Transverse colon (tissue), 4 donors: ENCODE measurements at regions of chr15 and their contacts with region 1.

Region 1: GRCh38 chr15:63093486-63094205 is 28.0 kb upstream of the LACTB start:
- DNase-seq: peak; percentile 87
- H3K4me3 ChIP-seq: no peak overlapping the region
- H3K27ac ChIP-seq: peak overlapping the region; percentile 28 to 54 (median 39)
- H3K4me1 ChIP-seq: peaks cover 8 to 32% (median 10%) of the 10 kb centered on the region in 4 donors
- H3K27me3 ChIP-seq: no peaks in the 10 kb centered on the region
- CTCF ChIP-seq: peak; percentile 79 to 92 (median 85)
- EP300 ChIP-seq: no peak
- POLR2A ChIP-seq: no peak

Region 2: GRCh38 chr15:62782039-62782791 is 311.4 kb before region 1 on chr15:
- in situ Hi-C with region 1: loop called in 3 of 4 experiments (anchors 10 kb)
- intact Hi-C with region 1: loop called (anchors 1 kb)
- DNase-seq: peak; percentile 54
- H3K4me3 ChIP-seq: no peak overlapping the region
- H3K27ac ChIP-seq: peak overlapping the region in 3 of 4 donors; percentile 34 to 69 (median 37)
- H3K4me1 ChIP-seq: peaks cover 0 to 8% (median 5%) of the 10 kb centered on the region in 4 donors
- H3K27me3 ChIP-seq: no peaks in the 10 kb centered on the region
- CTCF ChIP-seq: peak; percentile 61 to 85 (median 66)
- EP300 ChIP-seq: no peak
- POLR2A ChIP-seq: no peak

Region 3: GRCh38 chr15:62847900-62848489 is 245.7 kb before region 1 on chr15:
- in situ Hi-C with region 1: loop called in 1 of 4 experiments (anchors 10 kb)
- intact Hi-C with region 1: loop called (anchors 5 kb)
- DNase-seq: peak; percentile 83
- H3K4me3 ChIP-seq: no peak overlapping the region
- H3K27ac ChIP-seq: peak overlapping the region; percentile 2 to 44 (median 13)
- H3K4me1 ChIP-seq: peaks cover 6 to 17% (median 7%) of the 10 kb centered on the region in 4 donors
- H3K27me3 ChIP-seq: no peaks in the 10 kb centered on the region
- CTCF ChIP-seq: peak; percentile 53 to 73 (median 66)
- EP300 ChIP-seq: no peak
- POLR2A ChIP-seq: no peak

Region 4: GRCh38 chr15:63023351-63023945 is 70.2 kb before region 1 on chr15:
- in situ Hi-C with region 1: no loop called
- intact Hi-C with region 1: no loop called
- DNase-seq: no peak
- H3K4me3 ChIP-seq: no peak overlapping the region
- H3K27ac ChIP-seq: no peak overlapping the region
- H3K4me1 ChIP-seq: no peaks in the 10 kb centered on the region
- H3K27me3 ChIP-seq: no peaks in the 10 kb centered on the region
- CTCF ChIP-seq: no peak
- EP300 ChIP-seq: no peak
- POLR2A ChIP-seq: no peak

Region 5: GRCh38 chr15:63048115-63048775 is 45.4 kb before region 1 on chr15:
- in situ Hi-C with region 1: no loop called
- intact Hi-C with region 1: loop called (anchors 5 kb)
- DNase-seq: peak; percentile 93
- H3K4me3 ChIP-seq: peak overlapping the region; percentile 60 to 88 (median 86)
- H3K27ac ChIP-seq: peak overlapping the region; percentile 96 to 98 (median 96)
- H3K4me1 ChIP-seq: peaks cover 16 to 81% (median 54%) of the 10 kb centered on the region in 4 donors
- H3K27me3 ChIP-seq: peaks cover 14% of the 10 kb centered on the region
- CTCF ChIP-seq: peak; percentile 91 to 99 (median 96)
- EP300 ChIP-seq: no peak
- POLR2A ChIP-seq: peak; percentile 80